ENCODE measurements at regions of chr3 and their contacts with region 1.

Region 1: GRCh38 chr3:47016934-47017435 is 37.5 kb downstream of the NBEAL2 start:
- DNase-seq: peak; percentile 83
- H3K4me3 ChIP-seq: peak overlapping the region; percentile 2
- H3K27ac ChIP-seq: peak overlapping the region; percentile 61
- H3K4me1 ChIP-seq: peaks cover 26% of the 10 kb centered on the region
- CTCF ChIP-seq: no peak

Region 2: GRCh38 chr3:47380601-47381316 is 363.8 kb after region 1 on chr3 and contains the start of gene PTPN23:
- CTCF ChIA-PET with region 1: no interaction called
- POLR2A ChIA-PET with region 1: no interaction called
- intact Hi-C with region 1: loop called (anchors 5 kb)
- DNase-seq: peak; percentile 99
- H3K4me3 ChIP-seq: peak within 1 kb of the TSS; percentile 75
- H3K27ac ChIP-seq: peak within 1 kb of the TSS; percentile 63
- H3K4me1 ChIP-seq: peaks cover 35% of the 10 kb centered on the region
- CTCF ChIP-seq: no peak
- total RNA-seq, gene PTPN23: 13.6 and 15.5 TPM in 2 replicates